Astrocyte of the cerebellum (primary cell): ENCODE measurements at regions of chrX and their contacts with region 1.

Region 1: DNA sequence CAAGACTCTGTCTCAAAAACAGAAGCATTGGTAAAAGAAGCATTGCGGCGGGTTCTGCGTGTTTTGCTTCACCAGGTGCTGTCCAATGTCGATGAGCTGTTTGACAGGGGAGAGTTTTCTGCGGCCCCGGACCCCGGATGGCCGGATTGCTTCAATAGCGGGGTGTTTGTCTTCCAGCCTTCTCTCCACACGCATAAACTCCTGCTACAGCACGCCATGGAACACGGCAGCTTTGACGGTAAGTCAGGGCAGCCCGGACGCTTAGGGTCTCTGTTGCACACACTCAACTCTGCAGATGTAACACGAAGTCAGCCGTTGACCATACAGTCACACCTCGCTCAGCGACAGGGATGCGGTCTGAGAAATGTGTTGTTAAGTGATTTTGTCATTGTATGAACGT is 26.2 kb downstream of the GYG2 start:
- DNase-seq: no peak
- H3K4me3 ChIP-seq: no peak overlapping the region
- CTCF ChIP-seq: no peak

Region 2: DNA sequence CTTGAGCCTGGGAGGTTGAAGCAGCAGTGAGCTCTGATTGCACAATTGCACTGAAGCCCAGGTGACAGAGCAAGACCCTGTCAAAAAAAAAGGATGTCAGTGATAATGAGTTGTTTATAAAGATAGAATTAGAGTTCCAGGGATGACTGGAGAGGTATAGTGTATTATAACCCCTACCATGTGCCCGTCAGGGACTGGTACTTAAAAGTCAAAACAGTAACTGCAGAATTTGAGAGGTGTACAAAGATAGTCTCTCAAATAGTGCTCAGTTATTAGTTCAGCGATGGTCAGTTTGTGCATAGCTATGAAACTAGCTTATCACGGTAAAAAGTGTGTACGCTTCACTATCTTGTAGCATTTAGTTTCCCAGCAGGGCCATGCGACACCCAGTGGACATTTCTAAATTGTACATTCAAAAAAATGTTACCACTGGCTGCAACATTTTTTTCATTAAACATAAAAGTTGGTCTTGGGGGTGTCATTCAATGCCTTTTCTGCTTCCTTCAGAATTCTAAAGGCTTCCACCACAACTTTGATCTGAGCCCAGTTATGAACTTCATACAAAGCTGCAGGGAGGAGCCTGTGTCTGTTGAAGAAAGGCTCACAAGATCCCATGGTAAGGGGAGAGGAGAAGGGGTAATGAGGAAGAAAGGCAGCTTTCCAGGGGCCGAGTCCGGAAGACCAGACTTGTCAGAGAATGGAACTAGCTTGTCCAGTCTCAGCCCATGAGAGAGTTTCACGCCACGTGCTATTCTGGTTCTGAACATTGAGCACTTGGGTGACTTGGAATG is 35.4 kb before region 1 on chrX:
- in situ Hi-C with region 1: no loop called
- DNase-seq: no peak
- H3K4me3 ChIP-seq: no peak overlapping the region
- CTCF ChIP-seq: peak; percentile 39

Region 3: DNA sequence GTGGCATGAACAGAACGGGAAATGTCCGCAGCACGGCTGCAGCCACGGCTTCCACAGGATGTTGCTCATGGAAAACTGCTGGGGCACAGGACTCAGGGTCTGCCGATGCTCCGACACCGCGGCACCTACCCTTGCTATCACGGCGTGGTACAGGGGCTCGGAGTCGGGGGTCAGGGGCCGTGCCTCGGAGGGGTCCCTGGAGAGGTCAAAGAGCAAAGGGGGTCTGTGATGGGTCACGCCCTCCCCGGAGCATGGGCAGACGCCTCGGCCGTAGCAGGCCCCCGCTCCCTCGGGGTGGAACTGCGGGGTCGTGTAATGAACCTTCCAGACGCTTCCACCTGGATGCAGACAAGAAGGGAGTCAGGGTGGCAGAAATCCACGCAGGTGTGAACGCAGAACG is 52.4 kb after region 1 on chrX:
- in situ Hi-C with region 1: loop called (anchors 5 kb)
- DNase-seq: no peak
- H3K4me3 ChIP-seq: no peak overlapping the region
- CTCF ChIP-seq: no peak

Region 4: GRCh38 chrX:2928191-2928763 is 73.4 kb after region 1 on chrX:
- in situ Hi-C with region 1: no loop called
- DNase-seq: peak; percentile 31
- H3K4me3 ChIP-seq: peak overlapping the region; percentile 67
- CTCF ChIP-seq: no peak